ENCODE measurements at regions of chr22 and their contacts with region 1.

Region 1: DNA sequence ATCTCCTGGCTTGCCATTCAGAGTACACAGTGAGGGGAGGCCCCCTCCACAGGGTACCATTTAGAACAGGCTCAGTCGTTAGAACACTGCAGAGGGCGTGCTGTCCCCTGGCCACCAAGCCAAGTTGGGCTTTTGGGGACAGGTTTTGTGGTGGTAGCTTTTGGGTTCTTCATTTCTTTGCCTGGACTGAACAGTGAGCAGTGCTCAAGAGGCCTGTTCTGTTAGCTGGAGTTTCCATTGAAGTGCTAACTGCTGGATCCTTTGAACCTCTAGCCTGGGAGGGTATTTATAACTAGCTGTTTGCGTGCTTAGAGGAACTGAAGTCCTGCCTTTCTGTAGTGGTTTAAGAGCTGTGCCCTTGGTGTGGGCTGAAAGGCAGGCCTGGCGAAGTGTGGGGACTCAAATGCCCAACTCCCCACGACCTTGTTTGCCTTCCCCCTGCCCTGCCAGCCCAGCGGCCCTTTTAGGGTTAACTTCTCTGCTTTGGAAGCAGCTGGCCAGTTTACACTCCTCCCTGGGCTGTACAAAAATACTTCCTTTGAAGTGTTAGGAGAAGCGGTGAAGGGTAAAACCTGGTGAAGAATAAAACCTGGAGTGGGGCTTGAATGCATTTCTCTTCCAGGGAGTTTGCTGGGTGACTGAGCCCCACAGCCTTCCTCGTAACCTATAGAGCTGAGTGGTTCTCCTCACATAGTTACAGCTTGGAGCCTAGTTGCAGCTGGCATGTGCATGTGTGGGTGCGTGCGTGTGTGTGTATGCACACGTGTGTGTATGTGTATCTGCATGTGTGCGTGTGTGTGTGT is 34.6 kb downstream of the ZNRF3 start:
- ATAC-seq: peak; percentile 64 to 89 (median 86)
- H3K4me3 ChIP-seq: no peak overlapping the region
- H3K27ac ChIP-seq: no peak overlapping the region
- H3K4me1 ChIP-seq: peaks cover 16 to 32% of the 10 kb centered on the region in 2 donors

Region 2: DNA sequence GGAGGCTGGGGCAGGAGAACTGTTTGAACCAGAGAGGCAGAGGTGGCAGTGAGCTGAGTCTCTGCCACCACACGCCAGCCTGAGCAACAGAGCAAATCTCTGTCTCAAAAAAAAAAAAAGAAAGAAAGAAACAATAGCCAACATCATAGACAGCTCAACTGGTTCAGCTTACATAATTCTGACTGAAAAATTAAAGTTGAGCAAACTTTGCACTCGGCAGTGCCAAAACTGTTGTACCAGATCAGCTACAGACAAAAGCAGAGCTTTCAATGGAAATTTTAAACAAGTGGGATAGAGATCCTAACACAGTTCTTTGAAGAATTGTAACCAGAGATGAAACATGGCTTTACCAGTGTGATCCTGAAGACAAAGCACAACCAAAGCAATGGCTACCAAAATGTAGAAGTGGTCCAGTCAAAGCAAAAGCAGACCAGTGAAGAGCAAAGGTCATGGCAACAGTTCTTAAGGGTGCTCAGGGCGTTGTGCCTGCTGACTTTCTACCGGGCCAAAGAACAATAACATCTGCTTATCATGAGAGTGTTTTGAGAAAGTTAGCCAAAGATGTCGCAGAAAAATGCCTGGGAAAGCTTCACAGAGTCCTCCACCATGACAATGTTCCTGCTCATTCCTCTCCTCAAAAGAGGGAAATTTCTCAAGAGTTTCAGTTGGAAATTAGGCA is 297.6 kb before region 1 on chr22:
- in situ Hi-C with region 1: no loop called
- ATAC-seq: no peak
- H3K4me3 ChIP-seq: no peak overlapping the region
- H3K27ac ChIP-seq: no peak overlapping the region
- H3K4me1 ChIP-seq: no peaks in the 10 kb centered on the region

Region 3: DNA sequence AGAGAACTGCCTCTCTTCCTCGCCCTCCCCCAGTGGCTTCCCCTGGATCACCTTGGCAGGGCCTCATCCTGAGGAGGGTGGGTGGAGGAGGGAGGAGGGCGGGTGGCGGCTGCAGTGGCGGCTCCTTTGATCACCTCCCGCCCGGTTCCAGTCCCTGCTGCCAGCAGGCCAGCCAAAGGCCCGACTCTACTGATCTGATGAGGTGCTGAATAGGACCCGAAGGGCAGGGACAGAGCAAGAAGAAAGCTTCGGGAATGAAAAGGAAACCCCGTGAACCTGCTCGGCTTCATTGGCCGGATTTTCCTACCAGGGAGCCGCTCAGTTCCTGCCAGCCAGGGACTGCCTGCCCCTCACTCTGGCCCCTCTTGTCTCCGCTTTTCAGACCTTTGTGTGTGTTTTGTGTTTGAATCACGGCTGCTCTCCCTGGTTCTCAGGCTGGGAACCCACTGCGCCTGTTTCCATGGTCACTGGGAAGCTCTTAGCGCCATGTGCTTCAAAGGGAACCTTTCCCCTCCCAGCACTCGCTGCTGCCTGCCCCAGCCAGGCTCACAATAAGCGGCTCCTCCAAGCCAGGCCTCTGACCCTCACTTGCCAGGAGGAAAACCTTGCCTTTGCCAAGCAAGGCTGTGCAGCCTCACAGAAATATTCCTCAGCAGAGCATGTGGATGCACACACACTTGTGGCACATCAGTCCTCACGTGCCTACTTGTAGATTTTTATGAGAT is 86.9 kb after region 1 on chr22:
- in situ Hi-C with region 1: loop called in 1 of 9 experiments (anchors 25 kb)
- ATAC-seq: peak; percentile 20 to 92 (median 88)
- H3K4me3 ChIP-seq: peak overlapping the region in 3 of 5 donors; percentile 8 to 21 (median 9)
- H3K27ac ChIP-seq: peak overlapping the region; percentile 26 to 85
- H3K4me1 ChIP-seq: peaks cover 18 to 28% of the 10 kb centered on the region in 2 donors

Region 4: DNA sequence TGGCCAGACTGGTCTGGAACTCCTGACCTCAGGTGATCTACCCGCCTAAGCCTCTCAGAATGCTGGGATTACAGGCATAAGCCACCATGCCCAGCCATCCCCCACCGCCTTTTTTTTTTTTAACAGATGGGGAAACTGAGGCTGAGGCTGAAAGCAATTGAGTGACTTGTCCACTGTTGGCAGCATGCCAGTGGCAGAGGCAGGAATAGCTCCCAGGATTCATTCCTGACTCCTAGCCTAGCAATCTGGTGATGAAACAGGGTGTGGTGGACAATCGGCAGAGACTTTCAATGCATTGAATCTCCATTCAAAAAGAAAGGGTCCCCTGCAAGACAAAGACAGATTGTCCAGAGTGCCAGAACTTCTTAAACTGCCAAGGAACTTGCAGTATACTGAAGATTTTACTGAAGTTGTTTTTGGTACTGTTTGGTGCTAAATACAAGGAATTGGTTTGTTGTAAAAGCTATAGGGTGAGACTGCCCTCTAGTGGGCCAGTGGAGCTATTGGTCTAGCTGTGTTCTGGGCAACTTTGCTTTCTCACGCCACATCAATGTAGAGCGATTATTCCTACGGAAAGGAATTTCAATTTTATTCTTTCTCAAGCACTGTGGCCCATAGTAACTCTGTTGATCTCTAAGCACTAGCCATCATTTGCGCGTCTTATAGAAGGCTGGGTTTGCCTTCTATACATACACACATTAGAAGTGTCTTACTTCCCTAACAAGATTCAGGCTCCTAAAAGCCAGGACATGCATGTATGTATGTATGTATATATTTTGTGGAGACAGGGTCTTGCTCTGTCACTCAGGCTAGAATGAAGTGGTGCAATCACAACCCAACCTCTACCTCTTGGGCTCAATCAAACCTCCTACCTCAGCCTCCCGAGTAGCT is 122.7 kb after region 1 on chr22:
- in situ Hi-C with region 1: no loop called
- ATAC-seq: peak; percentile 79 to 92 (median 86)
- H3K4me3 ChIP-seq: no peak overlapping the region
- H3K27ac ChIP-seq: no peak overlapping the region
- H3K4me1 ChIP-seq: peaks cover 0 to 10% of the 10 kb centered on the region in 2 donors